Activated naive CD4-positive, alpha-beta T cell treated with anti-CD3 and anti-CD28 coated beads for 36 hours (primary cell): ENCODE measurements at regions of chr3 and their contacts with region 1.

Region 1: GRCh38 chr3:87272718-87273341 is 3.6 kb downstream of the POU1F1 start:
- DNase-seq: no peak
- H3K4me3 Mint-ChIP-seq: no peak overlapping the region
- H3K27ac Mint-ChIP-seq: no peak overlapping the region
- H3K4me1 Mint-ChIP-seq: peaks cover 37% of the 10 kb centered on the region
- H3K27me3 Mint-ChIP-seq: peaks cover 2% of the 10 kb centered on the region

Region 2: DNA sequence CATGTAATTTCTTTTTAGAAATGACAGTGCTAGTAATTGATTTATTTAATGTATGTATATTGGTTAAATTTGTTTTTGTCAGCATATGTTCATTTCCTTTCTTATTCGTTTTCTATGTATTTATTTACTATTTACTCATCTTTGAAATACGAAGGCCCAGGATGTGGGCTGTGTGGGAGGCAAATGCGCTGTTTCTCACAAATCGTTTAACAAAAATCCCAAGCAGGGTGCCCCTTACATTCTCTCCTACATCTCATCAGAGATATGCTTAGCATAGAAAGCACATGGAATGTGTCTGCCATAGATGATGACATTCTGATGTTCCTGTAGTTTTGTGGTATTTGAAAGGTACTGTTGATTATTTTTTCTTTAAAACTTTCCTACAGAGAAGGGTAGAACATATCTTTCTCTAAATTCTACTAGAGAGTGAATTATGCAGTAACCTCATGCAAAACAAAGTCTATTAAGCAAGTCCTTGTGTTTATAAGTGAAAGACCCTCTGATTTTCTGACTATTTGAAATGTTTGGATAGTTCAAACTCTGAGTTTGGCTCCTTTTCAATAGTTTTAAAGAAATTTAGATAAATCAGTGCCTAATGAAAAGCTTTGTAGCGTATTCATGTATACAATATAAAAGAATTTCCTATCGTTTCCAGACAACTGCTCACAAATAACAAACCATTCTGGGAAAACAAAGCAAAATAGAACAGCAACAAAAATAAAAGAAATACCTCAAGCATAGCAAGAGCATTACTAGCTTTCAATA is 170.8 kb before region 1 on chr3:
- CTCF ChIA-PET with region 1: no interaction called
- intact Hi-C with region 1: no loop called
- DNase-seq: no peak
- H3K4me3 Mint-ChIP-seq: no peak overlapping the region
- H3K27ac Mint-ChIP-seq: no peak overlapping the region
- H3K4me1 Mint-ChIP-seq: no peaks in the 10 kb centered on the region
- H3K27me3 Mint-ChIP-seq: peaks cover 3% of the 10 kb centered on the region

Region 3: GRCh38 chr3:87260270-87260669 is 12.6 kb before region 1 on chr3:
- CTCF ChIA-PET with region 1: interaction called, 32 read pairs
- intact Hi-C with region 1: no loop called
- DNase-seq: peak; percentile 66
- H3K4me3 Mint-ChIP-seq: no peak overlapping the region
- H3K27ac Mint-ChIP-seq: no peak overlapping the region
- H3K4me1 Mint-ChIP-seq: no peaks in the 10 kb centered on the region
- H3K27me3 Mint-ChIP-seq: no peaks in the 10 kb centered on the region

Region 4: DNA sequence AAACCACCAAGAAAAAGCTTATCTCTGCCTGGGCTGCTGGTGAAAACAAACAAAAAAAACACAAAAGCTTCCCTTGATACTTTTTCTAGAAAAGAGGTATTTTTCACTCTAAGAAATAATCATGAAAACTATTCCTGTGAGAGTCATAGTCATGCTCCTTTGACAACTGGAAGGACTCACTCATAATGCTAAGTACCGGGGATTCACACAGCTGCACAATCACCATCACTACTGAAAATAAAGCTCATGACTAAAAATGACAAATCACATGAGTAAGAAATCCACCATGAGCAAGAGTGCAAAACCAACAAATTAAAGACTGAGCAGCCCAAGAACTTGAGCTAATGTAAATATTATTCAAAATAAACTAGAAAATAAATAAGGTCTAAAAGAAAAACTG is 14.2 kb after region 1 on chr3:
- CTCF ChIA-PET with region 1: no interaction called
- intact Hi-C with region 1: loop called (anchors 1 kb)
- DNase-seq: no peak
- H3K4me3 Mint-ChIP-seq: no peak overlapping the region
- H3K27ac Mint-ChIP-seq: no peak overlapping the region
- H3K4me1 Mint-ChIP-seq: peaks cover 4% of the 10 kb centered on the region
- H3K27me3 Mint-ChIP-seq: no peaks in the 10 kb centered on the region

Region 5: DNA sequence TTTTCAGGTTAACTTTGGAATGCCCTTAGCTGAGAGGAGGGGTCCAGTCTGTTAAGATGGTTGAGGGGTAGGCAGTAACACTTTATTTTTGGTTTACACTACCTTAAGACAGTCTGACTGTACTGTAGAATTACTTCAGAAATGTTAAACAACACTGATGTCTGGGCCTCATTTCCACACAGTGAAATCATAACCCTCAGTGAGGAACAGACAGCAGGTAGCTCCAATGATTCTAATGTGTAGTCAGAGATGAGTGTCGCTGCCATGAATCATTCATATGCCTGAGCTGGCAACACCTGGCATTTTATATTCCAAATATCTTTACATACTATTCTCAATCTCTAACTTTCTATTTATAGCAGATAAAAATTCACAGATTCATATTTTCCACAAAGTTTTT is 40.8 kb after region 1 on chr3:
- CTCF ChIA-PET with region 1: no interaction called
- intact Hi-C with region 1: loop called (anchors 1 kb)
- DNase-seq: peak; percentile 16
- H3K4me3 Mint-ChIP-seq: no peak overlapping the region
- H3K27ac Mint-ChIP-seq: no peak overlapping the region
- H3K4me1 Mint-ChIP-seq: peaks cover 18% of the 10 kb centered on the region
- H3K27me3 Mint-ChIP-seq: peaks cover 3% of the 10 kb centered on the region

Region 6: GRCh38 chr3:87333393-87333892 is 60.6 kb after region 1 on chr3:
- CTCF ChIA-PET with region 1: no interaction called
- intact Hi-C with region 1: loop called (anchors 1 kb)
- DNase-seq: peak; percentile 49
- H3K4me3 Mint-ChIP-seq: no peak overlapping the region
- H3K27ac Mint-ChIP-seq: peak overlapping the region; percentile 82
- H3K4me1 Mint-ChIP-seq: peaks cover 17% of the 10 kb centered on the region
- H3K27me3 Mint-ChIP-seq: peaks cover 5% of the 10 kb centered on the region